ENCODE measurements at regions of chr20 and their contacts with region 1.

Region 1: DNA sequence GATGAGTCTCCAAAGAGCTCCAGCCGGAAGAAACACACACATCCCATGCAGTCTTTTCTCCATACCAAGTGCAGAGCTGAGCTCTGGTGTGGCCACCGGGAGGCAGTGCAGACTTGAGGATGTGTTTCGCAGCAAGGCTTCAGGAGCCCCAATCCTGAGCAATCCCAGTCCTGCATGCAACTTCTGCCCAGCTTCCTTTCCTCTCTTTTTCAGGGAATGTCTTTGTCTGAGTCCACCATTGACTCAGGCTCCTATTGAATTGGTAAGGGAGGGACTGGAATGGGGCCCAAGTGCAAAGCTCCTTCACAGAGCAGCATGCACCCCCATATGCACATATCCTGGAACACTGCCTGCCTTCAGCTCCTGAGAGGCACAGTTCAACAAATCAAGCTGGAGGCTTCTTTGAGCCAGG is 50.5 kb upstream of the ASIP start:
- DNase-seq: peak; percentile 67 to 84
- H3K4me3 ChIP-seq: no peak overlapping the region
- H3K27ac ChIP-seq: no peak overlapping the region
- H3K4me1 ChIP-seq: peaks cover 0 to 6% (median 3%) of the 10 kb centered on the region in 4 experiments; a peak in 4 of 7 replicates
- H3K27me3 ChIP-seq: no peaks in the 10 kb centered on the region
- CTCF ChIP-seq: peak; percentile 89 to 97 (median 89)
- EP300 ChIP-seq: no peak
- POLR2A ChIP-seq: 0 out of 3 replicates have a peak, but pooled peaks of 1 of the 2 experiments have one; percentile 24
- RAD21 ChIP-seq: peak; percentile 96 to 98

Region 2: DNA sequence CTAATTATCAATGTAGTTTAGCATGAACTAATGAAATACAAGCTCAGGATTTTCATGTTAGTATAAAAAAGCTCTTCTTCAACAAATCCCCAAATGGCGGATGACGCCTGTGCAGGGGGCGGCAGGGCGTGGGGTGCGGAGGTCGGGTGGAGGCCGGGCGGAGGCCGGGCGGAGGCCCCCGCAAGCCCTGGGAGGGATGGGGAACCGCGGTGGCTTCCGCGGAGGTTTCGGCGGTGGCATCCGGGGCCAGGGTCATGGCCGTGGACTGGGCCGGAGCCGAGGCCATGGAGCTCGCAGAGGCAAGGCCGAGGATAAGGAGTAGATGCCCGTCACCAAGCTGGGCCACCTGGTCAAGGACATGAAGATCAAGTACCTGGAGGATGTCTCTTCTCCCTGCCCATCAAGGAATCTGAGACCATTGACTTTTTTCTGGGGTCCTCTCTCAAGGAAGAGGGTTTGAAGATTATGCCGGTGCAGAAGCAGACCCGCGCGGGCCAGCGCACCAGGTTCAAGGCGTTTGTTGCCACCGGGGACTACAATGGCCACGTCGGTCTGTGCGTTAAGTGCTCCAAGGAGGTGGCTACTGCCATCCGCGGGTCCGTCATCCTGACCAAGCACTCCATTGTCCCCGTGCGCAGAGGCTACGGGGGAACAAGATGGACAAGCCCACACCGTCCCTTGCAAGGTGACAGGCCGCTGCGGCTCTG is 68.3 kb before region 1 on chr20:
- CTCF ChIA-PET with region 1: no interaction called
- POLR2A ChIA-PET with region 1: no interaction called
- DNase-seq: no peak
- H3K4me3 ChIP-seq: no peak overlapping the region
- H3K27ac ChIP-seq: no peak overlapping the region
- H3K4me1 ChIP-seq: no peaks in the 10 kb centered on the region
- H3K27me3 ChIP-seq: peaks cover 0 to 3% (median 0%) of the 10 kb centered on the region in 4 experiments; a peak in 1 of 7 replicates
- CTCF ChIP-seq: no peak
- EP300 ChIP-seq: no peak
- POLR2A ChIP-seq: no peak
- RAD21 ChIP-seq: no peak

Region 3: DNA sequence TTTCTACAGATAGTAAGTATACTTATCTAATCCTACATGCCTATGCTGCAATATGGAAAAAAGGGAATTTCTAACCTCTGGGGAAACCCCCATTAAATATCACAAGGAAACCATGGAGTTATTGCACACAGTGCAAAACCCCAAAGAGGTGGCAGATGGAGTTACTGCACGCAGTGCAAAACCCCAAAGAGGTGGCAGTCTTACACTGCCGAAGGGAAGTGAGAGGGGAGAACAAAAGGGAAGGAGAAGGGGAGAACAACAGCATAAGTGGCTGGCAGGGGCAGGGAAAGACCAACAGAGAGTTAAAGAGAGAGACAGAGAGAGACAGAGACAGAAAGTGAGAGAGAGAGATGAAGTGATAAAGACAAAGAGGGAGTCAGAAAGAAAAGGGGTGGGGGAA is 34.8 kb before region 1 on chr20:
- CTCF ChIA-PET with region 1: no interaction called
- POLR2A ChIA-PET with region 1: no interaction called
- DNase-seq: no peak
- H3K4me3 ChIP-seq: no peak overlapping the region
- H3K27ac ChIP-seq: no peak overlapping the region
- H3K4me1 ChIP-seq: peaks cover 0 to 5% (median 2%) of the 10 kb centered on the region in 4 experiments; a peak in 4 of 7 replicates
- H3K27me3 ChIP-seq: peaks cover 0 to 7% (median 5%) of the 10 kb centered on the region in 4 experiments; a peak in 3 of 7 replicates
- CTCF ChIP-seq: no peak
- EP300 ChIP-seq: no peak
- POLR2A ChIP-seq: no peak
- RAD21 ChIP-seq: no peak

Region 4: GRCh38 chr20:34180460-34181120 is 10.1 kb before region 1 on chr20:
- CTCF ChIA-PET with region 1: interaction called, 10 read pairs
- POLR2A ChIA-PET with region 1: interaction called, 3 read pairs
- DNase-seq: no peak
- H3K4me3 ChIP-seq: no peak overlapping the region
- H3K27ac ChIP-seq: no peak overlapping the region
- H3K4me1 ChIP-seq: peaks cover 0 to 2% (median 0%) of the 10 kb centered on the region in 4 experiments; a peak in 1 of 7 replicates
- H3K27me3 ChIP-seq: no peaks in the 10 kb centered on the region
- CTCF ChIP-seq: no peak
- EP300 ChIP-seq: no peak
- POLR2A ChIP-seq: no peak
- RAD21 ChIP-seq: no peak

Region 5: GRCh38 chr20:34215711-34216381 is 25.2 kb after region 1 on chr20:
- CTCF ChIA-PET with region 1: interaction called, 11 read pairs
- POLR2A ChIA-PET with region 1: no interaction called
- DNase-seq: peak; percentile 56 to 87
- H3K4me3 ChIP-seq: peak overlapping the region; percentile 25 to 57 (median 40)
- H3K27ac ChIP-seq: no peak overlapping the region
- H3K4me1 ChIP-seq: no peaks in the 10 kb centered on the region
- H3K27me3 ChIP-seq: peaks cover 0 to 22% (median 4%) of the 10 kb centered on the region in 4 experiments; a peak in 2 of 7 replicates
- CTCF ChIP-seq: peak in 1 of 3 experiments; percentile 6; a peak in 2 of 4 replicates
- EP300 ChIP-seq: 0 out of 3 replicates have a peak, but pooled peaks of 1 of the 2 experiments have one; percentile 41
- POLR2A ChIP-seq: peak in 1 of 2 experiments; percentile 44; a peak in 1 of 3 replicates
- RAD21 ChIP-seq: peak in 1 of 2 experiments; percentile 21; a peak in 1 of 4 replicates

Region 6: DNA sequence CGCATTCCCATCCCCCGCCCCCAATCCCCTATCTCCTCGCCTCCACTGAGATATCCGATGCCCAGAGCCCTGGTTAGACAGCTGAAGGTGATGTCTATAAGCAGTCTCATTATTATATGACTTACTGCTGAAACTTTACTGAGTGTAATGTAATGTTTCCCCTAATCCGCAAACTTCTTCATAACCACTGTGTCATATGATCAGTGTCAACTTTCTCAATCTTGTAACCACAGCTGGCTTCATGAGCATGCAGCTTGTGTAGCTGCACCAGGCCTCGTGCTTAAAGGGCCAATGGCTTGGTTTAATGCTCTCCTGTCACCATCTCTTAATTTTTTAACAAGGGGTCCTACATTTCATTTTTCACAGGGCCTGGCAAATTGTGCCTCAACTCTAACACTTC is 58.6 kb after region 1 on chr20:
- CTCF ChIA-PET with region 1: interaction called, 13 read pairs
- POLR2A ChIA-PET with region 1: interaction called, 3 read pairs
- DNase-seq: no peak
- H3K4me3 ChIP-seq: no peak overlapping the region
- H3K27ac ChIP-seq: no peak overlapping the region
- H3K4me1 ChIP-seq: no peaks in the 10 kb centered on the region
- H3K27me3 ChIP-seq: no peaks in the 10 kb centered on the region
- CTCF ChIP-seq: no peak
- EP300 ChIP-seq: no peak
- POLR2A ChIP-seq: no peak
- RAD21 ChIP-seq: no peak

Region 7: GRCh38 chr20:34256629-34257124 is 66.0 kb after region 1 on chr20:
- CTCF ChIA-PET with region 1: interaction called, 13 read pairs
- POLR2A ChIA-PET with region 1: no interaction called
- DNase-seq: no peak
- H3K4me3 ChIP-seq: no peak overlapping the region
- H3K27ac ChIP-seq: no peak overlapping the region
- H3K4me1 ChIP-seq: no peaks in the 10 kb centered on the region; a peak in 1 of 7 replicates
- H3K27me3 ChIP-seq: no peaks in the 10 kb centered on the region
- CTCF ChIP-seq: no peak
- EP300 ChIP-seq: no peak
- POLR2A ChIP-seq: no peak
- RAD21 ChIP-seq: no peak

Region 8: DNA sequence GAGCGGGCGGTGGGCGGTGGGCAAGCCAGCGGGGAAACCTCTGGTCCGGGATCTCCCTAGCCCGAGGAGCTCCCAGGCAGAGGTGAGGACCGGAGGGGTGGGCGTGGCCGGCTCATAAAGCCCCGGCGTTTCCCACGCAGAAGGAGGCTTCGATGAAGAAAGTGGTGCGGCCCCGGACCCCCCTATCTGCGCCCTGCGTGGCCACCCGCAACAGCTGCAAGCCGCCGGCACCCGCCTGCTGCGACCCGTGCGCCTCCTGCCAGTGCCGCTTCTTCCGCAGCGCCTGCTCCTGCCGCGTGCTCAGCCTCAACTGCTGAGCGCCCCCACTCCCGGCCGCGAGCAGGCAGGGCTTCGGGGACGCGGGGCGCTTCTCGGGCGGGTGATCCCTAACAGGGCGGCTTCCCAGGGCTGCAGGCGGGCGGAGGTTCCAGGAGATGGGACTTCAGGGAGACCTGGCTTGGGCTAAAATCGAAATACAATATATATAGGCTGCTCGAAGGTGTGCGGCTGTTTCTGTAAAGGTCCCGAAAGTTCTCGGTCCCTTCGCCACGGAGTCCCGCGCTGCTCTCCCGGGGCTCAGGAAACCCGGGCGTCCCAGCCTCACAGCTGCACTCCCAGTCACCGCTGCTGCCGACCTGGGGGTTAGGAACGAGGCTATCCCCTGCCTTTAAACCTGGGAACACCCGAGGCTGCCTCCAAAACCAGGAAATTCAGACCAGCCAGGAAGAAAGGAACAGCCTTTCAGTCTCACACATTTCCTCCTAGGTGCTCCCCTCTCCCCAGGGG is 78.4 kb after region 1 on chr20:
- CTCF ChIA-PET with region 1: interaction called, 11 read pairs
- POLR2A ChIA-PET with region 1: interaction called, 3 read pairs
- DNase-seq: peak in 1 of 2 experiments; percentile 73
- H3K4me3 ChIP-seq: peak overlapping the region; percentile 7 to 58 (median 41)
- H3K27ac ChIP-seq: no peak overlapping the region
- H3K4me1 ChIP-seq: no peaks in the 10 kb centered on the region
- H3K27me3 ChIP-seq: 0 out of 7 replicates have a peak, but pooled peaks cover 0 to 2% (median 0%) of the 10 kb centered on the region in 4 experiments
- CTCF ChIP-seq: no peak
- EP300 ChIP-seq: no peak
- POLR2A ChIP-seq: no peak
- RAD21 ChIP-seq: no peak

Measured in H1 (cell line).